ENCODE measurements at regions of chr6 and their contacts with region 1.

Region 1: GRCh38 chr6:36765594-36766398 is 68.2 kb downstream of the RAB44 start:
- DNase-seq: no peak
- H3K4me3 ChIP-seq: no peak overlapping the region
- H3K27ac ChIP-seq: peak overlapping the region in 1 of 4 donors; percentile 22
- H3K4me1 ChIP-seq: peaks cover 0 to 38% (median 18%) of the 10 kb centered on the region in 3 donors
- H3K27me3 ChIP-seq: no peaks in the 10 kb centered on the region
- CTCF ChIP-seq: peak; percentile 70 to 96 (median 92)
- POLR2A ChIP-seq: no peak

Region 2: GRCh38 chr6:36848658-36849441 is 83.1 kb after region 1 on chr6:
- intact Hi-C with region 1: loop called (anchors 5 kb)
- DNase-seq: no peak
- H3K4me3 ChIP-seq: peak overlapping the region in 2 of 4 donors; percentile 5 to 10
- H3K27ac ChIP-seq: peak overlapping the region in 2 of 4 donors; percentile 14 to 39
- H3K4me1 ChIP-seq: peaks cover 19 to 57% (median 21%) of the 10 kb centered on the region in 3 donors
- H3K27me3 ChIP-seq: no peaks in the 10 kb centered on the region
- CTCF ChIP-seq: no peak
- POLR2A ChIP-seq: no peak

Region 3: GRCh38 chr6:37207903-37208456 is 442.2 kb after region 1 on chr6:
- intact Hi-C with region 1: loop called (anchors 10 kb)
- DNase-seq: peak; percentile 30
- H3K4me3 ChIP-seq: no peak overlapping the region
- H3K27ac ChIP-seq: peak overlapping the region in 1 of 4 donors; percentile 7
- H3K4me1 ChIP-seq: peaks cover 5 to 34% (median 7%) of the 10 kb centered on the region in 3 donors
- H3K27me3 ChIP-seq: no peaks in the 10 kb centered on the region
- CTCF ChIP-seq: peak; percentile 71 to 93 (median 87)
- POLR2A ChIP-seq: no peak

Region 4: GRCh38 chr6:37324131-37325033 is 558.6 kb after region 1 on chr6:
- intact Hi-C with region 1: no loop called
- DNase-seq: no peak
- H3K4me3 ChIP-seq: no peak overlapping the region
- H3K27ac ChIP-seq: peak overlapping the region in 3 of 4 donors; percentile 20 to 77 (median 46)
- H3K4me1 ChIP-seq: peaks cover 0 to 59% (median 4%) of the 10 kb centered on the region in 3 donors
- H3K27me3 ChIP-seq: no peaks in the 10 kb centered on the region
- CTCF ChIP-seq: no peak
- POLR2A ChIP-seq: no peak

Measured in esophagus squamous epithelium (tissue), 5 donors.